Heart left ventricle (tissue), 16 donors: ENCODE measurements at regions of chr5 and their contacts with region 1.

Region 1: GRCh38 chr5:38765399-38765861 is 80.4 kb upstream of the OSMR start:
- DNase-seq: no peak
- ATAC-seq: no peak
- H3K4me3 ChIP-seq: no peak overlapping the region
- H3K27ac ChIP-seq: no peak overlapping the region
- H3K4me1 ChIP-seq: peaks cover 0 to 13% (median 4%) of the 10 kb centered on the region in 12 donors
- H3K27me3 ChIP-seq: no peaks in the 10 kb centered on the region
- CTCF ChIP-seq: no peak
- POLR2A ChIP-seq: no peak

Region 2: DNA sequence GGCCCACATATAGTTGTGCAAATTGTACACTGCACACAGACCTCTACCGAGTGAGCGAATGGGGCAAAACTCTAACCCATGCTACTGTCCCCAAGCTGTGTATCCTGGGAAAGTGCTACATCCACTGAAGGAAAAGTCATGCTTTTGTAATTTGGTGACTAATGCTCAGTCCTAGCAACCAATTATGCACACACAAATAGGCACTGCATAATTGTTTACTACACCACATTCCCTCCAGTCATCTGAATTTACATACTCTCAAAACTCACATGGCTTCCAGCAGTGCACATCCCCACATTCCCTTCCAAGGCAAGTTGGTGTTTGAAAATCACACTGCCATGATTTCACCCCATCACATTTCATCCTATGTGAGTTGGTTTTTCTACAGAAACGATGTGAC is 45.5 kb before region 1 on chr5:
- intact Hi-C with region 1: loop called in 1 of 10 experiments (anchors 10 kb)
- DNase-seq: no peak
- ATAC-seq: peak in 1 of 4 donors; percentile 16
- H3K4me3 ChIP-seq: no peak overlapping the region
- H3K27ac ChIP-seq: no peak overlapping the region
- H3K4me1 ChIP-seq: peaks cover 0 to 18% (median 4%) of the 10 kb centered on the region in 12 donors
- H3K27me3 ChIP-seq: no peaks in the 10 kb centered on the region
- CTCF ChIP-seq: no peak
- POLR2A ChIP-seq: no peak